Activated CD8-positive, alpha-beta T cell treated with anti-CD3 and anti-CD28 coated beads for 36 hours (primary cell): ENCODE measurements at regions of chr4 and their contacts with region 1.

Region 1: DNA sequence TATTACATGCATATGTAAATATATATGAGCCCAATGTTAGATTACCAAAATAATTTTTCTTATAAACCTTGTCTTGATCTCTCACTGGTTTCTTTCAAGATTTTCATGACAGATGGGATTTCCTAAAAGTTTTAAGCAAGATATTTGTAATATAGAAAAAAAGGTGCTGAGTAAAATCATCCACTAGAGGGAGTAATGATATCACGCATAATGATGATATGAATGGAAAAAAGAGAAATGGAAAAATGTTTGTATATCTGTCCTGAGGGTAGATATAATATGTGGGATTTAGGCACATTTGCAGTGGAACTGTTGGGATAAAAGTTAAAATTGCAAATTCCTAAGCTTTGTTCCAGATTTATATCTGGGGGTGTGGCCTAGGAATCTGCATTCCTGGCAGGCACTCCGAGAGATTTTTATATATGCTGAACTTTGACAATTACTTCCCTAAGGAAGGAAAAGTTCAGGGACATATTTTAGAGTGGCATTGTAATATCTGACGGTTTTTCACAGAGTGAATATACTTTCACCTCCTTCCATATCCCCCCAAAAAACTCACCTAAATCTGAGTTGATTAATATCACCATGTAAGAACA is 60.5 kb downstream of the TMA16 start:
- DNase-seq: no peak
- ATAC-seq: no peak
- H3K4me3 Mint-ChIP-seq: no peak overlapping the region
- H3K27ac Mint-ChIP-seq: no peak overlapping the region
- H3K4me1 Mint-ChIP-seq: peaks cover 24% of the 10 kb centered on the region
- H3K27me3 Mint-ChIP-seq: no peaks in the 10 kb centered on the region
- CTCF ChIP-seq: peak; percentile 85

Region 2: GRCh38 chr4:163175971-163176958 is 378.7 kb before region 1 on chr4:
- CTCF ChIA-PET with region 1: no interaction called
- POLR2A ChIA-PET with region 1: no interaction called
- intact Hi-C with region 1: no loop called
- DNase-seq: no peak
- ATAC-seq: no peak
- H3K4me3 Mint-ChIP-seq: no peak overlapping the region
- H3K27ac Mint-ChIP-seq: no peak overlapping the region
- H3K4me1 Mint-ChIP-seq: peaks cover 3% of the 10 kb centered on the region
- H3K27me3 Mint-ChIP-seq: peaks cover 5% of the 10 kb centered on the region
- CTCF ChIP-seq: no peak

Region 3: DNA sequence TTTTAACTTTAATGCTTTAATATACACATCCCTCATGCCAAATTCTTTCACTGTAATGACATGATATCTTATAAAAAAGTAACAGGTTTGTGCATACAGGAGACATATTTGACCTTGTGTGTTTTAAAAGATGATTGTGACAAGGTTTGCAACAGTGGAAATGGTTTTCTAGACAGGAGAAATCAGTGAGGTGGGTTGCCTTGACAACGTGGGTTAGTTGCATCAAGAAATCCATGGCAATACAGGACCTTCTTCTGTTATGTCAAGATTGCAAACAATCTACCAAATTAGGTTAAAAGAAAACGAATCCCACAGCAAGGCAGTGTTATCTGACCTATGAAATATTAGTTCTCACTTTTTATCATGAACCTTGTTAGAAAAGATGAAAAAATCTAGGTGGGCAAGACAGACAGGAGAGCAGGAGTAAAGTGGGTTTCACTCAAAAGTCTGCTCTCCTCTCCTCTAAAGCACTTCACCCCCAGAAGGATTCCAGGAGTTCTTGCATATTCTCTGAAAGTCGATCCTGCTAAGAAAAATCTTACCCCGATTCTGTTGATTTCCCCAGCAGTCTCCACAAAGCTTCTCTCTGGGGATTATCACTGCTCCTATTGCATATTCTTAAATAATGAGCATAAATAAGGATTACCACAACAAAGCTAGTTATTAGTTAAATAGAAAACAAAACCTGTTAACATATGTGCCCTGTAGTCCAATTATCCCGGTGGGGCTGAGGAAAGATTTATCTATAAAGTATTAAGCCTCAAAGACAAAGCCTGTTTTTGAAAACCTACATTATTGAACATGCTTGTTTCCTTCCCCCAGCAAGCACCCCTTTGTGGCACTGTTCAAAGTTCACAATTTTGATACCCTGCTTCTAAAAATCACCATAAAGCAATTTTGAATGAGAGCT is 10.5 kb after region 1 on chr4:
- CTCF ChIA-PET with region 1: interaction called, 11 read pairs
- POLR2A ChIA-PET with region 1: no interaction called
- intact Hi-C with region 1: no loop called
- DNase-seq: no peak
- ATAC-seq: no peak
- H3K4me3 Mint-ChIP-seq: no peak overlapping the region
- H3K27ac Mint-ChIP-seq: no peak overlapping the region
- H3K4me1 Mint-ChIP-seq: no peaks in the 10 kb centered on the region
- H3K27me3 Mint-ChIP-seq: no peaks in the 10 kb centered on the region
- CTCF ChIP-seq: no peak

Region 4: DNA sequence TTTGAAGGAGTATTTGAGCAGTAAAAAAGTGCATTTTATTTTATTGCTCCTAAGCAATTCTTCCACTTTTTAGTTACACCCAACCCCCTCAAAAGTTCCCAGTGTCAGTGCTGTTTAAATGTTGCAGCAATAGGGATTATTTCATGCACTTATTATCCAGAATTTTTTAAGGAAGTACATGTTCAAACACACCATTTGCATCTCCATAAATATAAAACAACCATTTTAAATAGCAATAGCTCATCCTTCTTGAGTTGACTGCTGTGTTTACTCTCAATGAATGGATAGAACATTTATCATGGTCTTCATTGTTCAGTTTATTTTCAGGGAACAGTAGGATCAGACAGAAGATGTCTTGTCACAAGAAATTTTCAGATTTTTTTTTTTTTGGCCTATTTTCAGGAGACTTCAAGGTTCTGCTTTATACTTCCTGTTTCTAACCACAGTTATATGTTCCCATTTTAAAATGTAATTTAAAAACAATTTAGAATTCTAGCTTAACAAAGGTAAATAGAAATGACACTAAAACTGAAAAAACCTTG is 111.4 kb after region 1 on chr4:
- CTCF ChIA-PET with region 1: interaction called, 22 read pairs
- POLR2A ChIA-PET with region 1: no interaction called
- intact Hi-C with region 1: no loop called
- DNase-seq: no peak
- ATAC-seq: no peak
- H3K4me3 Mint-ChIP-seq: no peak overlapping the region
- H3K27ac Mint-ChIP-seq: no peak overlapping the region
- H3K4me1 Mint-ChIP-seq: peaks cover 20% of the 10 kb centered on the region
- H3K27me3 Mint-ChIP-seq: no peaks in the 10 kb centered on the region
- CTCF ChIP-seq: no peak

Region 5: DNA sequence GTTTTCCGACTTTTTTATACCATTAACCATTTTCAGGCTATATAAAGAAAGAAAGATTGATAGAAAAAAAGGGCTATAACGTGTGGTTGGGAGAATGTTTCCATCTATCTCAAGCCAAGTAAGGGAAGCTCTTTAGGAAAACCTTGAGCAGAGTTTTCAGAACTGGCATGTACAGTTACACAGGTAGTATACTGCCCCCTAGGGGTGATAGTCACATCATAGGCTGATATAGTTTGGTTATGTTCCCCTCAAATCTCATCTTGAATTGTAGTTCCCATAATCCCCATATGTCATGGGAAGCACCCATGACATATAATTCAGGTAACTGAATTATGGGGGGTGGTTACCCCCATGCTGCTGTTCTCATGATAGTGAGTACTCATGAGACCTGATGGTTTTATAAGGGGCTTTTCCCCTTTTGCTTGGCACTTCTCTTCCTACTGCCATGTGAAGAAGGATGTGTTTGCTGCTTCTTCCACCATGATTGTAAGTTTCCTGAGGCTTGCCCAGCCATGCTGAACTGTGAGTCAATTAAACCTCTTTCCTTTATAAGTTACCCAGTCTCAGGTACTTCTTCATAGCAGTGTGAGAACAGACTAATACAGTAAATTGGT is 126.3 kb after region 1 on chr4:
- CTCF ChIA-PET with region 1: interaction called, 250 read pairs
- POLR2A ChIA-PET with region 1: no interaction called
- intact Hi-C with region 1: loop called (anchors 1 kb)
- DNase-seq: peak; percentile 24
- ATAC-seq: peak; percentile 45
- H3K4me3 Mint-ChIP-seq: no peak overlapping the region
- H3K27ac Mint-ChIP-seq: no peak overlapping the region
- H3K4me1 Mint-ChIP-seq: no peaks in the 10 kb centered on the region
- H3K27me3 Mint-ChIP-seq: peaks cover 3% of the 10 kb centered on the region
- CTCF ChIP-seq: peak; percentile 75

Region 6: DNA sequence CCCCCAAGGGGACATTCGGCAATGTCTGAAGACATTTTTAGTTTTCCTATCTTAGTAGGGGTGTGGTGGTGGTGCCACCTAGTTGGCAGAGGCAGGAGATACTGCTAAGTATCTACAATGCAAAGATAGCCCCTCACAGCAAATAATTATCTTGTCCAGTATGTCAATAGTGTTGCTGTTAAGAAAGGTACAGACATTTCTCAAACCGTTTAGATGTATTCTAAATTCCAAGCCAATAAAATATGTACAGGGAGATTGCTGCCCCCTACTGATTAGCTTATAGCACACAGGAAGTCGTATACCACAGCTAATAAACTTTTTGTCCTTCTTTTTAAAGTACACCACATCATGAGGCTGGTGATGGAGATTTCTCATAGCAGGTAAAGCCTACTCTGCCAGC is 200.0 kb after region 1 on chr4:
- CTCF ChIA-PET with region 1: interaction called, 4 read pairs
- POLR2A ChIA-PET with region 1: no interaction called
- intact Hi-C with region 1: loop called (anchors 5 kb)
- DNase-seq: no peak
- ATAC-seq: no peak
- H3K4me3 Mint-ChIP-seq: no peak overlapping the region
- H3K27ac Mint-ChIP-seq: no peak overlapping the region
- H3K4me1 Mint-ChIP-seq: no peaks in the 10 kb centered on the region
- H3K27me3 Mint-ChIP-seq: peaks cover 1% of the 10 kb centered on the region
- CTCF ChIP-seq: peak; percentile 33

Region 7: GRCh38 chr4:164731827-164732474 is 1177.0 kb after region 1 on chr4:
- CTCF ChIA-PET with region 1: interaction called, 16 read pairs
- POLR2A ChIA-PET with region 1: no interaction called
- intact Hi-C with region 1: loop called (anchors 5 kb)
- DNase-seq: peak; percentile 59
- ATAC-seq: peak; percentile 74
- H3K4me3 Mint-ChIP-seq: no peak overlapping the region
- H3K27ac Mint-ChIP-seq: no peak overlapping the region
- H3K4me1 Mint-ChIP-seq: no peaks in the 10 kb centered on the region
- H3K27me3 Mint-ChIP-seq: peaks cover 6% of the 10 kb centered on the region
- CTCF ChIP-seq: peak; percentile 84